Activated B cell treated with CpG ODN at 0.5 μM for 24 hours (primary cell): ENCODE measurements at regions of chr10 and their contacts with region 1.

Region 1: GRCh38 chr10:131786756-131787605 is 113.8 kb upstream of the PPP2R2D start:
- DNase-seq: no peak
- ATAC-seq: no peak
- H3K4me3 Mint-ChIP-seq: no peak overlapping the region
- H3K27ac Mint-ChIP-seq: no peak overlapping the region
- H3K4me1 Mint-ChIP-seq: no peaks in the 10 kb centered on the region
- H3K27me3 Mint-ChIP-seq: peaks cover 3% of the 10 kb centered on the region
- CTCF ChIP-seq: no peak

Region 2: DNA sequence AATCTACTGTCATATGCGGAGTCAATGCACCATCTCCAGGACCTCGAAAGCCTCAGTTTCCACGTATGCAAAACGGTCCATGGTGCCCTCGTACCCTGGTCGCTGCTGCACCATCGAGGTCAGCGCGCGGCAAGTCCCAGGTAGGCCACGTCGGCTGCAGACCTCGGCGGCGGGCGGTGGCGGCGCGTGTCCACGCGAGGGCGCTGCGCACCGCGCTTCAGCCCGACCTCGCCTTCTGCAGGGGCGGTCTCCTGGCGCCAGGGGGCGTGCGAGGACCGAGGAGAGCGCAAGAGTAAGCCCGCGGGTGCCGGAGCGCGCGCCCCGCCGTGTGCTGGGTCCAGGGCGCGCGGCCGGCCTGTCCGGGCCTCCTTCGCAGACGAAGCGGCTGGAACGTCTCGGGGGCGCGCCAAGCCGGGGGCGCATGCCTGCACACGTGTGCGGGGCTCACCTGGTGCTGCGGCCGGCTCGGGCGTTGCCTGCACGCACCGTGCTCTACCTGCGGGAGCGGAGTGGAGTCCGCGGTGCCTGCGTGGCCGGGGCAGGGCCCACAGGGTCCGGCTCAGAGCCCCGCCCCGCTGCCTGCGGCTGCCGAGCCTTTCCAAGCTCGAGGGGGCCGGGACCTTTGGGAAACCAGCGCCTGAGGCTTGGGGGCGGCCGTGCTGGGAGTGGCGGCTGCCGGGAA is 1596.8 kb before region 1 on chr10:
- CTCF ChIA-PET with region 1: no interaction called
- POLR2A ChIA-PET with region 1: no interaction called
- intact Hi-C with region 1: loop called (anchors 1 kb)
- DNase-seq: peak; percentile 90
- ATAC-seq: peak; percentile 97
- H3K4me3 Mint-ChIP-seq: peak overlapping the region; percentile 19
- H3K27ac Mint-ChIP-seq: no peak overlapping the region
- H3K4me1 Mint-ChIP-seq: peaks cover 2% of the 10 kb centered on the region
- H3K27me3 Mint-ChIP-seq: peaks cover 5% of the 10 kb centered on the region
- CTCF ChIP-seq: peak; percentile 99

Region 3: GRCh38 chr10:131874991-131875451 is 88.0 kb after region 1 on chr10:
- CTCF ChIA-PET with region 1: no interaction called
- POLR2A ChIA-PET with region 1: no interaction called
- intact Hi-C with region 1: loop called (anchors 1 kb)
- DNase-seq: peak; percentile 51
- ATAC-seq: peak; percentile 72
- H3K4me3 Mint-ChIP-seq: no peak overlapping the region
- H3K27ac Mint-ChIP-seq: no peak overlapping the region
- H3K4me1 Mint-ChIP-seq: no peaks in the 10 kb centered on the region
- H3K27me3 Mint-ChIP-seq: peaks cover 15% of the 10 kb centered on the region
- CTCF ChIP-seq: no peak